GM13977 (cell line): ENCODE measurements at regions of chr6 and their contacts with region 1.

Region 1: GRCh38 chr6:37207903-37208456 is 38.0 kb downstream of the PIM1 start:
- DNase-seq: peak; percentile 74
- CTCF ChIP-seq: peak; percentile 85

Region 2: GRCh38 chr6:36885461-36886401 is 322.2 kb before region 1 on chr6 and contains the start of gene C6orf89:
- in situ Hi-C with region 1: loop called (anchors 10 kb)
- DNase-seq: peak; percentile 91
- CTCF ChIP-seq: peak; percentile 80

Region 3: GRCh38 chr6:37029249-37029971 is 178.6 kb before region 1 on chr6:
- in situ Hi-C with region 1: loop called (anchors 10 kb)
- DNase-seq: peak; percentile 68
- CTCF ChIP-seq: peak; percentile 91